B cell (primary cell): ENCODE measurements at regions of chr10 and their contacts with region 1.

Region 1: GRCh38 chr10:6088721-6089390 is at the start of gene RBM17:
- DNase-seq: peak; percentile 99
- ATAC-seq: peak; percentile 88
- H3K4me3 ChIP-seq: peak within 1 kb of the TSS; percentile 70 to 94 (median 77)
- H3K4me3 Mint-ChIP-seq: peak within 1 kb of the TSS; percentile 90
- H3K27ac ChIP-seq: peak within 1 kb of the TSS in 1 of 2 donors; percentile 78
- H3K27ac Mint-ChIP-seq: peak within 1 kb of the TSS; percentile 92
- H3K4me1 ChIP-seq: peaks cover 41 to 43% of the 10 kb centered on the region in 2 donors
- H3K4me1 Mint-ChIP-seq: peaks cover 63% of the 10 kb centered on the region
- H3K27me3 ChIP-seq: no peaks in the 10 kb centered on the region
- H3K27me3 Mint-ChIP-seq: no peaks in the 10 kb centered on the region
- CTCF ChIP-seq: peak; percentile 100
- total RNA-seq, gene RBM17: 162 and 168 TPM in 2 replicates

Region 2: DNA sequence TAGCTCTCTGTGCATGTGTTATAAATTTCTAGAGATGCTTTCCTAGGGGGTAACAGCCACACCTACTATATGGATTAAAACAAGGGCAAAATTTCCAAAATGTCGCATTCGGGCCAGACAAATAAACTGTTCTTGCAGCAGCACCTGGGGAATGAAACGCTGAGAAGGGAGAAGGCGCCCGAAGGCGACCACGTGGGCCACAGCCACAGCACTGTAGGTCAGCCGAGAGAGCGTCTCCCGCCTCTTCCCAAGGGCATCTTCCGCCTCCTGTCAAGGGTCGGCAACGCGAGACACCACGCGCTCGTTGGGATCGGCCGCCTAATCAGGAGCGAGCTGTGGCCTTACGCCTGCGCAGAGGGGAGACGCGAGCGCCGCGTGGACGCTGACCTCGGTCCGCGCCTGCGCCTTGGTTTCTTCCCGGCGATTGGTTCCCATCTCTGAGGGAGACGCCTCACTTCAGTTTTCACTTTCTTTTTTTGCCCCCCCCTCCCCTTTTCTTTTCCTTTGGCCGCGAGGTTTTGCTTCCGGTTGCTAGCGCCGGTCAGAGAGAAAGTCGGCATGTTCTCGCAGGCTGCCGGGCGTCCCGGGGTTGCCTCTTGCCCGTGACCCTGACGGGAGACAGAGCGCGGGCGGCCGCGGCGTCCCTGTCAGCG is 404.4 kb before region 1 on chr10 and contains the start of gene TASOR2:
- CTCF ChIA-PET with region 1: no interaction called
- POLR2A ChIA-PET with region 1: no interaction called
- intact Hi-C with region 1: loop called (anchors 1 kb)
- DNase-seq: peak; percentile 95
- ATAC-seq: peak; percentile 83
- H3K4me3 ChIP-seq: peak within 1 kb of the TSS; percentile 31 to 87 (median 75)
- H3K4me3 Mint-ChIP-seq: peak within 1 kb of the TSS; percentile 98
- H3K27ac ChIP-seq: peak within 1 kb of the TSS; percentile 78 to 97
- H3K27ac Mint-ChIP-seq: peak within 1 kb of the TSS; percentile 95
- H3K4me1 ChIP-seq: peaks cover 27 to 33% of the 10 kb centered on the region in 2 donors
- H3K4me1 Mint-ChIP-seq: peaks cover 33% of the 10 kb centered on the region
- H3K27me3 ChIP-seq: no peaks in the 10 kb centered on the region
- H3K27me3 Mint-ChIP-seq: peaks cover 4% of the 10 kb centered on the region
- CTCF ChIP-seq: no peak
- total RNA-seq, gene TASOR2: 68.6 and 69.6 TPM in 2 replicates

Region 3: GRCh38 chr10:5977471-5978229 is 111.2 kb before region 1 on chr10 and contains the start of gene IL15RA:
- CTCF ChIA-PET with region 1: interaction called, 16 read pairs
- POLR2A ChIA-PET with region 1: interaction called, 3 read pairs
- intact Hi-C with region 1: loop called (anchors 1 kb)
- DNase-seq: peak; percentile 88
- ATAC-seq: peak; percentile 77
- H3K4me3 ChIP-seq: peak within 1 kb of the TSS; percentile 74 to 96 (median 93)
- H3K4me3 Mint-ChIP-seq: peak within 1 kb of the TSS; percentile 90
- H3K27ac ChIP-seq: peak within 1 kb of the TSS; percentile 65 to 75
- H3K27ac Mint-ChIP-seq: peak within 1 kb of the TSS; percentile 95
- H3K4me1 ChIP-seq: peaks cover 8 to 27% of the 10 kb centered on the region in 2 donors
- H3K4me1 Mint-ChIP-seq: peaks cover 29% of the 10 kb centered on the region
- H3K27me3 ChIP-seq: peaks cover 0 to 3% (median 0%) of the 10 kb centered on the region in 4 experiments
- H3K27me3 Mint-ChIP-seq: no peaks in the 10 kb centered on the region
- CTCF ChIP-seq: peak; percentile 43
- total RNA-seq, gene IL15RA: 6.8 and 9.3 TPM in 2 replicates

Region 4: DNA sequence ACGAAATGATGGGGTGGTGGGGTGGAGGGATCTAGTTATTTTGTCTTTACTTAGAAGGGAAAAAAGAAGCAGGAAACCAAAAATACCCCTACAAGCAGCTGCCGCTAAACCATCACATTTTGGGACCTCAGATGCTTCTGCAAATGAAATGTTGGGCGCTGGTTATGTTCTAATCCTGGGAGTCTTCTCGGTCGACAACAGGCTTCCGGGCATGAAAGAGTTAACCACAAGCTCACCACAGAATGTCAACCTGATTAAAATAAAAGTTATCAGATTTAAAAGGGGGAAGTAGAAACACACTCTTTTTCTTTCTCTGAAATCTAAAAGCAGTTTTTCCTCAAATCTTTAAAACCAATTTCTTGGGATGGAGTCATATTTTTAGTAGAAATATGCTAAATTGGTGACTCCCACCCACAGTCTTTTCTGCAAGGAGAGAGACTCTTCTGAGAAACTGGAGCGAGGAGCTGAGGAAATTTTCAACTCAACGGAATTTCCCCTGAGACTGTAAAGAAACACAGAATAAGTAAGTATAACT is 43.5 kb before region 1 on chr10:
- CTCF ChIA-PET with region 1: interaction called, 186 read pairs
- POLR2A ChIA-PET with region 1: interaction called, 28 read pairs
- intact Hi-C with region 1: no loop called
- DNase-seq: no peak
- ATAC-seq: no peak
- H3K4me3 ChIP-seq: peak overlapping the region in 3 of 5 experiments; percentile 2 to 30 (median 5)
- H3K4me3 Mint-ChIP-seq: peak overlapping the region; percentile 82
- H3K27ac ChIP-seq: peak overlapping the region; percentile 21 to 69
- H3K27ac Mint-ChIP-seq: peak overlapping the region; percentile 94
- H3K4me1 ChIP-seq: peaks cover 57 to 58% of the 10 kb centered on the region in 2 donors
- H3K4me1 Mint-ChIP-seq: peaks cover 75% of the 10 kb centered on the region
- H3K27me3 ChIP-seq: no peaks in the 10 kb centered on the region
- H3K27me3 Mint-ChIP-seq: no peaks in the 10 kb centered on the region
- CTCF ChIP-seq: no peak

Region 5: GRCh38 chr10:6068422-6068821 is 20.4 kb before region 1 on chr10:
- CTCF ChIA-PET with region 1: interaction called, 163 read pairs
- POLR2A ChIA-PET with region 1: interaction called, 11 read pairs
- intact Hi-C with region 1: loop called (anchors 1 kb)
- DNase-seq: peak; percentile 79
- ATAC-seq: peak; percentile 69
- H3K4me3 ChIP-seq: peak overlapping the region in 2 of 5 experiments; percentile 19 to 40
- H3K4me3 Mint-ChIP-seq: peak overlapping the region; percentile 85
- H3K27ac ChIP-seq: peak overlapping the region; percentile 80 to 91
- H3K27ac Mint-ChIP-seq: peak overlapping the region; percentile 99
- H3K4me1 ChIP-seq: peaks cover 59 to 64% of the 10 kb centered on the region in 2 donors
- H3K4me1 Mint-ChIP-seq: peaks cover 83% of the 10 kb centered on the region
- H3K27me3 ChIP-seq: no peaks in the 10 kb centered on the region
- H3K27me3 Mint-ChIP-seq: no peaks in the 10 kb centered on the region
- CTCF ChIP-seq: no peak

Region 6: DNA sequence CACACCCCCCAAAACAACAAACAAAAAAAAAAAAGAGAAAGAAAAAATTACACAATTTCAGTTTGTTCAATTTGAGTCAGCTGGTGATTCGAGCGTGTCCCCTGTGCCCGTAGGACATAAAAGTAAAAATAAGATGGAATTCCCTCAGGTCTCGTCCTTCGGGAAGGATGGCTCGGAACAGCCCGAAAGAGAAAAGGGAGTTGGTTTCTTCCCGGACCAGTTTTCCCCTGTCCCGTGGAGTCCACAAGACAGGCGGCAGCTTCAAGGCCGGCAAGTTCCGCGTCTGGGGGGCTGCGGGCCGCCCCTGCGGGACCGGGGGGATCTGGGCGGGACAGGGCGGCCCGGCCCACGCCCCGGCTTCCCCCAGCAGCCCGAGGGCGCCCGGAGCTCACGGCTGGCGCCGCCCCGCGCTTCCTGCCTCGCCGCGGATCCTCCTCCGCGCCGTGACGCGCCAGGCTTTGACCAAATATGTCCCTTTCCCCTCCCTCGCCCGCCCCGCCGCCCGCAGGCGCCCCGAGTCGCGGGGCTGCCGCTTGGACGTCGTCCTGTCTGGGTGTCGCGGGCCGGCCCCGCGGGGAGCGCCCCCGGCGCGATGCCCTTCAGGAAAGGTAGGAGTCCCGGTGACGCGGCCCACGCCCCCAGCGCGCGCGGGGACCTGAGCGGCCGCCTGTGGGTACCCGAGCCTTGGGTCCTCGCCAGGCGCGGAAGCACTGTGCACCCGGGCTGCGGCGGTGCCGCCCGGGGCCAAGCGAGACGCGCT is 55.7 kb after region 1 on chr10:
- CTCF ChIA-PET with region 1: interaction called, 8 read pairs
- POLR2A ChIA-PET with region 1: no interaction called
- intact Hi-C with region 1: loop called (anchors 2 kb)
- DNase-seq: peak; percentile 91
- ATAC-seq: peak; percentile 87
- H3K4me3 ChIP-seq: peak overlapping the region; percentile 63 to 93 (median 74)
- H3K4me3 Mint-ChIP-seq: peak overlapping the region; percentile 91
- H3K27ac ChIP-seq: peak overlapping the region; percentile 49 to 79
- H3K27ac Mint-ChIP-seq: peak overlapping the region; percentile 74
- H3K4me1 ChIP-seq: peaks cover 26 to 50% of the 10 kb centered on the region in 2 donors
- H3K4me1 Mint-ChIP-seq: peaks cover 56% of the 10 kb centered on the region
- H3K27me3 ChIP-seq: peaks cover 0 to 17% (median 5%) of the 10 kb centered on the region in 4 experiments
- H3K27me3 Mint-ChIP-seq: peaks cover 3% of the 10 kb centered on the region
- CTCF ChIP-seq: no peak

Region 7: GRCh38 chr10:6678211-6678803 is 589.5 kb after region 1 on chr10:
- CTCF ChIA-PET with region 1: interaction called, 3 read pairs
- POLR2A ChIA-PET with region 1: no interaction called
- intact Hi-C with region 1: loop called (anchors 5 kb)
- DNase-seq: peak; percentile 53
- ATAC-seq: no peak
- H3K4me3 ChIP-seq: no peak overlapping the region
- H3K4me3 Mint-ChIP-seq: no peak overlapping the region
- H3K27ac ChIP-seq: no peak overlapping the region
- H3K27ac Mint-ChIP-seq: no peak overlapping the region
- H3K4me1 ChIP-seq: no peaks in the 10 kb centered on the region
- H3K4me1 Mint-ChIP-seq: peaks cover 2% of the 10 kb centered on the region
- H3K27me3 ChIP-seq: peaks cover 0 to 13% (median 0%) of the 10 kb centered on the region in 4 experiments
- H3K27me3 Mint-ChIP-seq: peaks cover 32% of the 10 kb centered on the region
- CTCF ChIP-seq: peak; percentile 73